ENCODE measurements at regions of chr11 and their contacts with region 1.

Region 1: DNA sequence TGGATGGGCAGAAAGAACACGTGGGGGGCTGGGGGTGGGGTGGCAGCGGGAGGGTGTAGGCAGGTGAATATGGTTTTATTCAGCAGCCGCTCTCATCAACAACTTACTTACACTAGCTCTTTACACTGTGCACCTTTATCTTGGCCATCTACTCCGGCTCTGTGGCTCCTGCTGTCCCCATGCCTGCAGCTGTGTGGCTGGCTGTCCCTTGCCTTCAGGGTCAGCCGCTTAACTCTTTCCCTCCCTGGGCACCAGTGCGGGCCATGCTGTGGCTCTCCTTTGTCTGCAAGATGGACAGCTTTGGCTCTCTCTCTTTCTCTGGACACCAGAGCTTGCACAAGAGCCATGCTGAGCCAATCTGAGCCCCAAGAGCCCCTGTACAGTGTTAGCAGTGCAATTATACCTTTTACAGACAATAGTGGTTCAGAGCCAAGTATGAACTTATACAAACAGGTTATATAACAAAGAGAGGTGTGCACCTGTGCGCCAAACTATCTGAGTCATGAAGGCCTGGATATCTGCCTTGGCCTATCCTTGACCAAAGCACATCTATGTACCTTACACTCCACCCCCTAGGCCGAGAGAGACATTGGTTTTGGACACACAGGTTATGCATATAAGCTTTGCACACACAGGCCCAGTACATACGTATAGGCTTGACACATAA is 94.3 kb upstream of the CTSC start:
- DNase-seq: no peak
- H3K4me3 Mint-ChIP-seq: no peak overlapping the region
- H3K27ac Mint-ChIP-seq: no peak overlapping the region
- H3K4me1 Mint-ChIP-seq: no peaks in the 10 kb centered on the region
- H3K27me3 Mint-ChIP-seq: no peaks in the 10 kb centered on the region
- CTCF ChIP-seq: no peak

Region 2: DNA sequence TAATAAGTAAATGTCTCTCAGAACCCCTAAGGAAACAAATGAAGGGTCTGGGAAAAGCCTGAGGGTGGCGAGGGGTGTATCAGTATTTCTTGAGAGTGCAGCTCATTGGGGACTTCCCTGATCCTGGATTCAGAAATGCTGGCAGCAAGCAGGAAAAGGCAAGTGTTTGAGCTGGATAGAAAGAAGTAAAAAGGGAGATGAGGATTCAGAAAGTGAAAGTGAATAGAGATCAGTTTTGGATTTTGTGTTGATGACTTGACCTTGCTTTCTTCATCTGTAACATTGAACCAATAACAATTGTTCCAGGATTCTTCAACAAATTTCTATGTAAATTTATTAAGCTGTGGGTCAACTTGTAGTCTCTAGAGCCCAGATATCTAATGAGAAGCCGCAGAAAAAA is 27.4 kb before region 1 on chr11:
- CTCF ChIA-PET with region 1: interaction called, 11 read pairs
- intact Hi-C with region 1: no loop called
- DNase-seq: no peak
- H3K4me3 Mint-ChIP-seq: no peak overlapping the region
- H3K27ac Mint-ChIP-seq: no peak overlapping the region
- H3K4me1 Mint-ChIP-seq: peaks cover 26% of the 10 kb centered on the region
- H3K27me3 Mint-ChIP-seq: no peaks in the 10 kb centered on the region
- CTCF ChIP-seq: no peak

Measured in Calu3 (cell line).